Mammary epithelial cell (primary cell): ENCODE measurements at regions of chr1 and their contacts with region 1.

Region 1: GRCh38 chr1:162391790-162392563 is 10.4 kb downstream of the C1orf226 start:
- DNase-seq: no peak
- H3K4me3 ChIP-seq: no peak overlapping the region
- H3K27ac ChIP-seq: no peak overlapping the region
- H3K4me1 ChIP-seq: peaks cover 4% of the 10 kb centered on the region
- H3K27me3 ChIP-seq: peaks cover 2% of the 10 kb centered on the region
- CTCF ChIP-seq: peak; percentile 85 to 90

Region 2: DNA sequence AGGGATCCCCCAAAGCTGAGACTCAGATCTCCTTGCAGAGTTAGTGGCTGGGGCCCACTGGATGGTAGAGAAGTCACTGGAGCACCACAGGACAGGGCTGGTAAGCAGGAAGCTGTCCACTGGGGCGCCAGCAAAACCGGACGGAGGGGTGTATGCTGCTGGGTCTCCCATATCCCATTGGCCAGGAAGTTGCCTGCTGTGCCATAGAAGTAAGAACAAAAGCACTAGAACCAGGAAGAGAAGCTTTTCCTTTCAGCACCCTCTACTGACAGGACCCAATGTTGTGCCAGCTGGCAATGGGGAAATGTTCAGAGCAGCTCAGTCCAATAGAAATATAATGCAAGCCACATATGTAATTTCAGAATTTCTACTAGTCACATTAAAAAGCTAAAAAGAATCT is 161.9 kb before region 1 on chr1:
- CTCF ChIA-PET with region 1: no interaction called
- dilution Hi-C with region 1: no loop called
- in situ Hi-C with region 1: no loop called
- intact Hi-C with region 1: loop called (anchors 5 kb)
- DNase-seq: no peak
- H3K4me3 ChIP-seq: no peak overlapping the region
- H3K27ac ChIP-seq: no peak overlapping the region
- H3K4me1 ChIP-seq: no peaks in the 10 kb centered on the region
- H3K27me3 ChIP-seq: no peaks in the 10 kb centered on the region
- CTCF ChIP-seq: peak in 1 of 2 donors; percentile 41

Region 3: GRCh38 chr1:162248854-162249535 is 143.0 kb before region 1 on chr1:
- CTCF ChIA-PET with region 1: no interaction called
- dilution Hi-C with region 1: no loop called
- in situ Hi-C with region 1: no loop called
- intact Hi-C with region 1: no loop called
- DNase-seq: peak; percentile 16
- H3K4me3 ChIP-seq: no peak overlapping the region
- H3K27ac ChIP-seq: no peak overlapping the region
- H3K4me1 ChIP-seq: peaks cover 8% of the 10 kb centered on the region
- H3K27me3 ChIP-seq: no peaks in the 10 kb centered on the region
- CTCF ChIP-seq: no peak

Region 4: DNA sequence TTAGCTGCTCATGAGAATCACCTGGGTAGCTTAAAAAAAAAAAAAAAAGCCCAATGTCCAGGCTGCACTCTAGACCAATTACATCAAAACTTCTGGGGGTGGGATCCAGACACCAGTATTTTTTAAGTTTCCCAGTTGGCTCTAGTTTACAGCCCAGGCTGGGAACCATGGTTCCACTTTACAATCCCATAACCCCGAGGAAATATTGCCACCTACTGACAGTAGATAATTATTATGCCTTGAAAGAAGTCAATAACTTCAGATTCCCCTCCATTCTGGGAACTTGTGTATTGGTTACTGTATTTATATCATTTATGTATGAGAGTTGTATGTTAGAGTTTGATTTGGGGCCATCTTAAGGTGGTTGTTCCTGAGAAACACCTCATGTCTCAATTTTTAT is 115.5 kb before region 1 on chr1:
- CTCF ChIA-PET with region 1: no interaction called
- dilution Hi-C with region 1: no loop called
- in situ Hi-C with region 1: no loop called
- intact Hi-C with region 1: loop called (anchors 1 kb)
- DNase-seq: peak; percentile 16
- H3K4me3 ChIP-seq: no peak overlapping the region
- H3K27ac ChIP-seq: no peak overlapping the region
- H3K4me1 ChIP-seq: no peaks in the 10 kb centered on the region
- H3K27me3 ChIP-seq: no peaks in the 10 kb centered on the region
- CTCF ChIP-seq: peak in 1 of 2 donors; percentile 57

Region 5: GRCh38 chr1:162335126-162335525 is 56.9 kb before region 1 on chr1:
- CTCF ChIA-PET with region 1: no interaction called
- dilution Hi-C with region 1: no loop called
- in situ Hi-C with region 1: loop called in 1 of 2 experiments (anchors 10 kb)
- intact Hi-C with region 1: no loop called
- DNase-seq: no peak
- H3K4me3 ChIP-seq: no peak overlapping the region
- H3K27ac ChIP-seq: no peak overlapping the region
- H3K4me1 ChIP-seq: no peaks in the 10 kb centered on the region
- H3K27me3 ChIP-seq: no peaks in the 10 kb centered on the region
- CTCF ChIP-seq: no peak

Region 6: DNA sequence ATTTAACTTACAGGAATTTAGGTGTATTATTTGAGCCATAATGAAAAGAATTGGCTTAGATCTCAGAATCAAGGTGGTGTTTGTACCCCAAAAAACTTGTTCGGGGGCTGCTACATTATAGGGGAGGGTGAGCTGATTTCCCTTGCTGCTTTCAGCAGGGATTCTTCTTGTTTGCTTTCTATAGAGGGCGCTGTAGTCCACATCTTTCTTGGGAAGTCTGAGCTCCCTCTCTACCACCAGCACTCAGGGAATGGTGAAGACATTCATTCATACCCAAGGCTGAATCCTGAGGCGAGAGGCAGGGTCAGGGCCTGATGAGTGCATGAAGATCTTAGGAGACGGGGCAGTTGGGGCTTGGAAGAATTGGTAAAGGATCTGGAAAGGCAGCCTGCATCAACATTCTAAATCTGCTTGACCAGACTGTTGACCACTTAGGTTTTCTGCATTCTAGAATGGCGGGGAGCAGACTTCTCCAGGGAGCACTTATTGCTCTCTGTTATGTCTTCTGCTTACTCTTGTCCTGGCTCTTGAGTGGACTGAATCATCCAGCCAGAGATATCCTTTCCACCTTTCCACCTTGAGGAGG is 34.2 kb before region 1 on chr1:
- CTCF ChIA-PET with region 1: interaction called, 18 read pairs
- dilution Hi-C with region 1: no loop called
- in situ Hi-C with region 1: loop called in 1 of 2 experiments (anchors 5 kb)
- intact Hi-C with region 1: loop called (anchors 1 kb)
- DNase-seq: peak; percentile 33
- H3K4me3 ChIP-seq: no peak overlapping the region
- H3K27ac ChIP-seq: no peak overlapping the region
- H3K4me1 ChIP-seq: no peaks in the 10 kb centered on the region
- H3K27me3 ChIP-seq: no peaks in the 10 kb centered on the region
- CTCF ChIP-seq: peak; percentile 51 to 72